Prostate gland (tissue), 2 donors: ENCODE measurements at regions of chr12 and their contacts with region 1.

Region 1: GRCh38 chr12:84502907-84503787 is 409.5 kb downstream of the SLC6A15 start:
- DNase-seq: peak; percentile 18
- H3K4me3 ChIP-seq: no peak overlapping the region
- H3K27ac ChIP-seq: no peak overlapping the region
- H3K4me1 ChIP-seq: no peaks in the 10 kb centered on the region
- H3K27me3 ChIP-seq: no peaks in the 10 kb centered on the region
- CTCF ChIP-seq: peak in 3 of 4 experiments; percentile 38 to 50 (median 42)
- POLR2A ChIP-seq: no peak

Region 2: DNA sequence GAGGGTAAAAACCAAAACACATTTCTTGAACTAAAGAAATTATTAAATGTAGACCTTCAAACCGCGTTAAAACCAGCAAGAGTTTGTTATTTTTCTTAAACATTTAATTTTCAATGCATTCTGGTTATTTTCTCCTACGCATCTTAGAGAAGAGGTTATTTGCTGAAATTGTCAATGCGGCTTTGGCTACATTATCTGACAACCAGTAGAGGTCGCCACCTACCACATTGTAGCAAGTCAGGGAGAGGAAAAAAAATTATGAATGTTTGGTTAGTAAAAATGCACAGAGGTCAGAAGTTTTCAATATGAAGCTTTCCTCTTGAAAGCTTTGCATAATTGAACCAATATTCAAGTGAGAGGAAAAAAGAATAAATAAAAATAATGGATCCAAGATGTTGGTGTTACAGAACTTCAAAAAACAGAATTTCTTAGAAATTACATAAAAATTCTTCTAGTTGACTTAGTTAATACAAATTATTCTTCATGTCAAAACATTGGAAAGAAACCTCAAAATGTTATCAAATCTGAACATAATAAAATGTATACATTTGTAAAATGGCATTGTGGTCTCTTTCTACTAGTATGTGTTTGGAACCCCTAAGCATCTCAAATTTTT is 1975.9 kb before region 1 on chr12:
- intact Hi-C with region 1: loop called (anchors 10 kb)
- DNase-seq: peak; percentile 46
- H3K4me3 ChIP-seq: no peak overlapping the region
- H3K27ac ChIP-seq: no peak overlapping the region
- H3K4me1 ChIP-seq: no peaks in the 10 kb centered on the region
- H3K27me3 ChIP-seq: no peaks in the 10 kb centered on the region
- CTCF ChIP-seq: peak in 3 of 4 experiments; percentile 68 to 71 (median 68)
- POLR2A ChIP-seq: no peak